ENCODE measurements at regions of chr15 and their contacts with region 1.

Region 1: GRCh38 chr15:34587717-34588674 is 4.5 kb upstream of the GOLGA8B start:
- DNase-seq: peak; percentile 83
- H3K4me3 Mint-ChIP-seq: peak overlapping the region; percentile 74
- H3K27ac Mint-ChIP-seq: peak overlapping the region; percentile 61
- H3K4me1 Mint-ChIP-seq: peaks cover 13% of the 10 kb centered on the region
- H3K27me3 Mint-ChIP-seq: no peaks in the 10 kb centered on the region

Region 2: GRCh38 chr15:34038023-34038870 is 549.7 kb before region 1 on chr15:
- CTCF ChIA-PET with region 1: no interaction called
- intact Hi-C with region 1: loop called (anchors 1 kb)
- DNase-seq: peak; percentile 70
- H3K4me3 Mint-ChIP-seq: peak overlapping the region; percentile 92
- H3K27ac Mint-ChIP-seq: peak overlapping the region; percentile 92
- H3K4me1 Mint-ChIP-seq: peaks cover 17% of the 10 kb centered on the region
- H3K27me3 Mint-ChIP-seq: no peaks in the 10 kb centered on the region

Region 3: DNA sequence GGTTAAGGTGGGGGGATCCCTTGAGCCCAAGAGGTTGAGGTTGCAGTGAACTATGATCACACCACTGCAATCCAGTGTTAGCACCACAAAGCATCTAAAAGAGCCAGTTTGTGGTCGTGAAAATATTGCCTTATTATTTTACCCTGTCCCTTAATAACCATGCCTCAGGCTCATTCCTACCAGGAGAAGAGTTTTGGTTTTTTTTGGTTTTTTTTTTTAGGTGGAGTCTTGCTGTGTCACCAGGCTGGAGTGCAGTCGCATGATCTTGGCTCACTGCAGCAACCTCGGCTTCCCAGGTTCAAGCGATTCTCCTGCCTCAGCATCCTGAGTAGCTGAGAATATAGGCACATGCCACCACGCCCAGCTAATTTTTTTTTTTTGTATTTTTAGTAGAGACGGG is 531.1 kb before region 1 on chr15:
- CTCF ChIA-PET with region 1: interaction called, 9 read pairs
- intact Hi-C with region 1: loop called (anchors 1 kb)
- DNase-seq: no peak
- H3K4me3 Mint-ChIP-seq: no peak overlapping the region
- H3K27ac Mint-ChIP-seq: no peak overlapping the region
- H3K4me1 Mint-ChIP-seq: no peaks in the 10 kb centered on the region
- H3K27me3 Mint-ChIP-seq: no peaks in the 10 kb centered on the region

Region 4: GRCh38 chr15:34109797-34110663 is 478.0 kb before region 1 on chr15:
- CTCF ChIA-PET with region 1: interaction called, 5 read pairs
- intact Hi-C with region 1: loop called (anchors 1 kb)
- DNase-seq: peak; percentile 12
- H3K4me3 Mint-ChIP-seq: no peak overlapping the region
- H3K27ac Mint-ChIP-seq: no peak overlapping the region
- H3K4me1 Mint-ChIP-seq: no peaks in the 10 kb centered on the region
- H3K27me3 Mint-ChIP-seq: no peaks in the 10 kb centered on the region

Region 5: GRCh38 chr15:34241372-34242330 is 346.3 kb before region 1 on chr15:
- CTCF ChIA-PET with region 1: interaction called, 15 read pairs
- intact Hi-C with region 1: loop called (anchors 1 kb)
- DNase-seq: peak; percentile 45
- H3K4me3 Mint-ChIP-seq: no peak overlapping the region
- H3K27ac Mint-ChIP-seq: peak overlapping the region; percentile 54
- H3K4me1 Mint-ChIP-seq: peaks cover 38% of the 10 kb centered on the region
- H3K27me3 Mint-ChIP-seq: no peaks in the 10 kb centered on the region

Region 6: DNA sequence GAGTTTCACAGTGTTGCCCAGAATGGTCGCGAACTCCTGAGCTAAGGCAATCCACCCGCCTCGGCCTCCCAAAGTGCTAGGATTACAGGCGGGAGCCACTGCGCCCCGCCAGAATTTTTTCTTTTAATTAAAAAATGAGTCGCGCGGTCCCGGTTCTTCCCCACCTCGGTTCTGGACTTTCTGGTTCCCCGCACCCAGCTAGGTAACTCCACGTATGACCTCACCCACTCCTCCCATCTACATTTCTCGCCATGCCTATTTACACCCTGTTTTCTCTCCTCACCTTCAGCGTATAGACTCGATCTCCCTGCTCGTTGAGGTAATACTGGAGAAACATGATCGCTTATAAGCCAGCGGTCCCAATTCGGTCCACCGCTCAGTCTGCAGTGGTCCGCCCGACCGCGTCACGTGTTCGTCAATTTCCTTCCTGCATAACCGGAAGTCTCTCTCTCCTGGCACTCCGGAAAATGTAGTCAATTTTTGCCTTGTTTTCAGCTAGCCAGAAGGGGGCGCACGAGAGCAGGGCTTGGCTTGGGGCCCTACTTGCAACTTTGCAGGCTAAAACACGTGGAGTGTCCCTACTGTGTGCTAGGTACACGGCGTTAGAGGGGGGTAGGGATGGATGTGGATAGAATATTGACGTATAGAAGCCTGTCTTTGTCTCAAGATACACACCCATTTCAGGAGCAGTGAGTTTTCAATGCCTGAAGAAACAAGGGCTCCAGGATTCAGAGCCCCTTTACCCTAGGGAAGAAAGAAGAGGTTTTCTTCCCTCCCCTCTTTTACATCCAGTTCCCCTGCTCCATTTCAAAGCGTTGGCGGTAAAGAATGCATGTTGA is 245.0 kb before region 1 on chr15 and contains the starts of genes NOP10 and NUTM1:
- CTCF ChIA-PET with region 1: interaction called, 13 read pairs
- intact Hi-C with region 1: loop called (anchors 1 kb)
- DNase-seq: peak; percentile 98
- H3K4me3 Mint-ChIP-seq: no peak within 1 kb of the TSS
- H3K27ac Mint-ChIP-seq: no peak within 1 kb of the TSS
- H3K4me1 Mint-ChIP-seq: peaks cover 35% of the 10 kb centered on the region
- H3K27me3 Mint-ChIP-seq: no peaks in the 10 kb centered on the region
- total RNA-seq, gene NOP10: 220 to 227 TPM
- total RNA-seq, gene NUTM1: 0.05 TPM in 1 of 2 experiments, not detected in the other

Measured in activated naive CD4-positive, alpha-beta T cell treated with anti-CD3 and anti-CD28 coated beads for 36 hours (primary cell).